ENCODE measurements at regions of chr3 and their contacts with region 1.

Region 1: GRCh38 chr3:57755668-57756527 is at the start of gene SLMAP:
- DNase-seq: peak; percentile 92 to 98
- H3K4me3 ChIP-seq: peak within 1 kb of the TSS; percentile 89 to 90
- H3K27ac ChIP-seq: peak within 1 kb of the TSS; percentile 87
- H3K4me1 ChIP-seq: peaks cover 16 to 19% of the 10 kb centered on the region in 2 donors
- H3K27me3 ChIP-seq: no peaks in the 10 kb centered on the region
- CTCF ChIP-seq: no peak
- total RNA-seq, gene SLMAP: 502 TPM

Region 2: DNA sequence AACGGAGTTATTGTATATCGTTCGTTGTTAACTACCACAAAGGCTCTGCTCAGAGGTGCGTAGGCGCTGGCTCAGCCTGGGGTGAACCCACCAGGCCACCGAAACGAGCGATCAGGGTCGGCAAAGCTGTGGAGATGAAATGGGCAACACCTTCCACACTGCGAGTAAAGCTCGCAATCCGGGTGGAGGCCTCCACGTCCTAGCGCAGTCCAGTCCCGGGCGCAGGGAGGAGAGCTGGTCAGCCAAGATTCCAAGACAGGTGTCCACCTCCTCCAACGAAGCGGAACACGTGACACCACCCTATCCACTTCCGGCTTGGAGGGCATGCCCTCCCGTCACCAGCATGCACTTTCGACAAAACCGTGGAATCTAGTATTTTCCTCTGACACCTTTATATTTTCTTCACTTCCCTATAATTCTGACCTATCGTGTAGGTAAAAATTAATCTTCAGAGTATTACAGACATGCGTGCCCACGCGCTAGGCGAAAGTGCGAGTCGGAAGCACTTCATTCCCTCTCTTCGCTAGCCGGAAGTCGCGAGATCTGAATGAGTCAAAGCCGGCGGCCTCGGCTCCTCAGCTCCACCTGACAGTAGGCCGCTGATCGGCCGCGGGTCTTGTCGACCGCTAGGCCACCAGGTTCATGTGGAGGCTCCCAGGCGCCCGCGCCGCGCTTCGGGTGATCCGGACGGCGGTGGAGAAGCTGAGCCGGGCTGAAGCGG is 200.0 kb before region 1 on chr3 and contains the start of gene PDE12:
- intact Hi-C with region 1: loop called (anchors 5 kb)
- DNase-seq: peak; percentile 49 to 95
- H3K4me3 ChIP-seq: peak within 1 kb of the TSS; percentile 90
- H3K27ac ChIP-seq: peak within 1 kb of the TSS; percentile 88 to 90
- H3K4me1 ChIP-seq: peaks cover 3 to 18% of the 10 kb centered on the region in 2 donors
- H3K27me3 ChIP-seq: no peaks in the 10 kb centered on the region
- CTCF ChIP-seq: no peak
- total RNA-seq, gene PDE12: 3.0 TPM

Region 3: DNA sequence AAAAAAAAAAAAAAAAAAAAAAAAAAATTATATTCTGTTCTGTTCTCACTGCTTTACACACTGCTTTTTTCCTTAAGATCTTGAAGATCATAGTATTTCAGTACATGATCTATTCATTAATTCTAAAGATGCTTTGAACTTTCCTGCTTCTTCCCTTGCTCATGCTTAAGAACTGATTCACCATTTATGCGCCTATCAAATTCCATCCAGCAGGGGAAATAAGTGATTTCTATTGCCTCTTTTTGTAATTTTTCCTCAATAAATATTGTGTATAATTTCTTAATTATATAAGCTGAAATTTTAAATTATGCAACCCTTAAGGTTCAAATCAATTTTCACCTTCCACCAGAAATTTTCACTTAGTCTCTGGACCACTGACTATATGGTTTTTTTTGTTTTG is 73.6 kb before region 1 on chr3:
- intact Hi-C with region 1: no loop called
- DNase-seq: no peak
- H3K4me3 ChIP-seq: no peak overlapping the region
- H3K27ac ChIP-seq: no peak overlapping the region
- H3K4me1 ChIP-seq: no peaks in the 10 kb centered on the region
- H3K27me3 ChIP-seq: no peaks in the 10 kb centered on the region
- CTCF ChIP-seq: no peak